ENCODE measurements at regions of chr2 and their contacts with region 1.

Region 1: GRCh38 chr2:177724398-177725287 is 332.1 kb downstream of the AGPS start:
- DNase-seq: peak; percentile 9
- H3K4me3 ChIP-seq: no peak overlapping the region
- H3K27ac ChIP-seq: no peak overlapping the region
- H3K4me1 ChIP-seq: peaks cover 13% of the 10 kb centered on the region
- H3K27me3 ChIP-seq: no peaks in the 10 kb centered on the region
- CTCF ChIP-seq: peak; percentile 30 to 78 (median 70)
- POLR2A ChIP-seq: no peak

Region 2: GRCh38 chr2:177489719-177490301 is 234.8 kb before region 1 on chr2:
- intact Hi-C with region 1: loop called (anchors 10 kb)
- DNase-seq: no peak
- H3K4me3 ChIP-seq: no peak overlapping the region
- H3K27ac ChIP-seq: no peak overlapping the region
- H3K4me1 ChIP-seq: no peaks in the 10 kb centered on the region
- H3K27me3 ChIP-seq: no peaks in the 10 kb centered on the region
- CTCF ChIP-seq: peak in 3 of 4 experiments; percentile 46 to 59 (median 48)
- POLR2A ChIP-seq: no peak

Region 3: DNA sequence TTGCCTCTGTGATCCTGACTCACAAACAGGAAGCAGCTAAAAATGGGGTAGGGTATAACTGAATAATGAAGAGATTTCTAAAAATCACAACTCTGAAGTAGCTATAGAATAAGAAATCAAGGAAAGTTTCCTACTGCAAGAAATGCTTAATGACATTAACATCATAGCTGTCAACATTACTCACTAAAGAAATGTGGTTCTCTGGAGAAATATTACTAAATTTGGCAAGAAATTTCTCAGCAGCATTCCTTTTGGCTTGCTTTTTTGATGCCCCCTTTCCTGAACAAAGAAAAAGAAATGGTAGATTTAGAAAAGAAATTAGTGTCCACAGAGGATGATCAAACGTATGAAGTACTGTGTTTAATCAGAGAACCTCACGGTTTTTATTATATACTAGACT is 716.8 kb after region 1 on chr2:
- intact Hi-C with region 1: no loop called
- DNase-seq: no peak
- H3K4me3 ChIP-seq: no peak overlapping the region
- H3K27ac ChIP-seq: no peak overlapping the region
- H3K4me1 ChIP-seq: peaks cover 3% of the 10 kb centered on the region
- H3K27me3 ChIP-seq: no peaks in the 10 kb centered on the region
- CTCF ChIP-seq: no peak
- POLR2A ChIP-seq: no peak

Measured in prostate gland (tissue), 2 donors.